Heart right ventricle (tissue), 16 donors: ENCODE measurements at regions of chr6 and their contacts with region 1.

Region 1: DNA sequence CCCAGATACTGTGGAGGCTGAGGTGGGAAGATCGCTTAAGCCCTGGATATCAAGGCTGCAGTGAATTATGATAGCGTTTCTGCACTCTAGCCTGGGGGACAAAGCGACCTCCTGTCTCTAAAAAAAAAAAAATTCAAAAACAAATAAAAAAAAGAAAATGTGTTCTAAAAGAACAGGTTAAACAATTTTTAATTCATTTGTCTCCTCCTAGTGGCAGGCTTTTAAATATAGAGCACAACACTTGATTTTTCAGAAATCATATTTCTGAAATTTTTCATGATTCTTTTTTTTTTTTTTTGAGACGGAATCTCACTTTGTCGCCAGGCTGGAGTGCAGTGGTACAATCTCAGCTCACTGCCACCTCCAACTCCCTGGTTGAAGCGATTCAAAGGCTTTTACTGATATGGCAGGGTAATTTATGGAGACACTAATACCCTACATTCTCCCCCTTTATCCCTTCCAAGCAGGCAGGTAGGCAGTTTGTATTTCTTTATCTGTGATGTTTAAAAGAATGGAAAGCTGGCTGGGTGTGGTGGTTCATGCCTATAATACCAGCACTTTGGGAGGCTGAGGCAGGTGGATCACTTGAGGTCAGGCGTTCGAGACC is 8.7 kb upstream of the GTF3C6 start:
- DNase-seq: no peak
- ATAC-seq: peak in 1 of 8 donors; percentile 19
- H3K4me3 ChIP-seq: no peak overlapping the region
- H3K27ac ChIP-seq: no peak overlapping the region
- H3K4me1 ChIP-seq: peaks cover 0 to 10% (median 0%) of the 10 kb centered on the region in 9 donors
- H3K27me3 ChIP-seq: no peaks in the 10 kb centered on the region
- CTCF ChIP-seq: peak; percentile 19 to 70 (median 56)

Region 2: DNA sequence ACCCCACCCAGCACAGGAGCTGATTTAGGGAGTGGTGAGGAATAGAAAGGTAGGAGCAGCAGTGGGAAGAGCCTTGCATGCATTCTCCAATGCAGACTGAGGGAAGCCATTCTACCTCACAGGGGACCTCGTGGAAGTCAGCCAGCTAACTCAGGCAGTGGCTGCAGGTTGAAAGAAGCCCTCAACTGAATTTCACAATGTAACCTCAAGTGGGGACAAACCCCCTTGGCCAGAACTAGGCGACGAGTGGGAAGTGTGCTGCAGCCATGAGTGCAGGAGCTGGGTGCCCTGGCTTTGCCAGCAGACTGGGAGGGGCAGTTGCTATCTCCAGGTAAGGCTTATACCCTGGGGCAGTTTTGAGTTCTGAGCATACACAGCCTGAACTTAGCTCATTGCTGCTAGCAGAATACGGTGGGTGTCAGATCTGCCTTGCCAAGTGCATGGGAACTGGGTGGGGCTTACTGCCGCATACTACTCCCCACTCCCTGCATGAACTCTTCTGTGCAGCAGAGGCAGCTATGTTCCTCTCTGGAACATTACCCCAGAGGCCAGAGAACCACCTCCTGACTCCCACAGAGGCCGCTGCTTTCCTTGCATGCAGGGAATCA is 261.0 kb before region 1 on chr6:
- intact Hi-C with region 1: loop called in 9 of 10 experiments (anchors 2 to 5 kb)
- DNase-seq: no peak
- ATAC-seq: peak in 1 of 8 donors; percentile 31
- H3K4me3 ChIP-seq: no peak overlapping the region
- H3K27ac ChIP-seq: no peak overlapping the region
- H3K4me1 ChIP-seq: peaks cover 0 to 27% (median 5%) of the 10 kb centered on the region in 9 donors
- H3K27me3 ChIP-seq: no peaks in the 10 kb centered on the region
- CTCF ChIP-seq: no peak

Region 3: GRCh38 chr6:111015389-111016124 is 65.8 kb after region 1 on chr6:
- intact Hi-C with region 1: no loop called
- DNase-seq: no peak
- ATAC-seq: no peak
- H3K4me3 ChIP-seq: no peak overlapping the region
- H3K27ac ChIP-seq: no peak overlapping the region
- H3K4me1 ChIP-seq: peaks cover 0 to 9% (median 0%) of the 10 kb centered on the region in 9 donors
- H3K27me3 ChIP-seq: no peaks in the 10 kb centered on the region
- CTCF ChIP-seq: no peak

Region 4: DNA sequence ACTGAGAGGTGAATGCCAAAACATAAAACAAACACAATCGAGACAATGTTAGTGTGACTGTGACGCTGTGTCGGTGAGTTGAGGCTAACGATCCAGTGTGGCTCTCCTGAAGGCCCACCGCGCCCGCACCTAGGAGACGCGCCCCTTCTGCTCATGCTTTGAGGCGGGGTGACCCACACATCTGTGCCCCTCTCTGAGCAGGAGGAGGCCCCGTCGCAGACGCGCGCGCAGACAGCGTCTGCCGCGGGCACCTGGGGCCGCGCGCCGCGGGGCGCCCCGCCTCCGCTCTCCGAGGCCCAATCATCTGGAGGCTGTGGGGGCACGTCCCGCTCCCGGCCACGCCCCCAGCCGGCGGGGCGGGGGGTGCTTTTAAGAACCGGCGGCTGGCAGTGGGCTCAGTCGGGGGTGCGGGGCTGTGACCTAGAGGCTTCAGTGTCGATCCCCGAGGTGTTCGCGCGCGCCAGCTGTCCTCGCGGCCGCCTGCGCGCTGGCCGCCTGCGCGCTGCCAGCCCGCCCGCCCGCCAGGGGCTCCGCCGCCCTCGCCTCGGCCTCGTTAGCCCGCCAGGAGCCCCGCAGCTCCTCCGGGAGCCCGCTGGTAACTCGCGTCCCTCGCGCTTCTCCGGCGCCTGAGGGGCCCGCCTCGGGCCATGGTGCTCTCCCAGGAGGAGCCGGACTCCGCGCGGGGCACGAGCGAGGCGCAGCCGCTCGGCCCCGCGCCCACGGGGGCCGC is 137.5 kb after region 1 on chr6 and contains the start of gene SLC16A10:
- intact Hi-C with region 1: no loop called
- DNase-seq: peak; percentile 73 to 74
- ATAC-seq: peak; percentile 92 to 97 (median 95)
- H3K4me3 ChIP-seq: peak within 1 kb of the TSS; percentile 29 to 68 (median 62)
- H3K27ac ChIP-seq: peak within 1 kb of the TSS in 8 of 10 donors; percentile 20 to 65 (median 54)
- H3K4me1 ChIP-seq: peaks cover 0 to 23% (median 13%) of the 10 kb centered on the region in 9 donors
- H3K27me3 ChIP-seq: peaks cover 0 to 65% (median 43%) of the 10 kb centered on the region in 7 donors
- CTCF ChIP-seq: no peak
- total RNA-seq, gene SLC16A10: 3.1 to 8.1 (median 7.2) TPM